ENCODE measurements at regions of chr12 and their contacts with region 1.

Region 1: GRCh38 chr12:113973109-113973904 is 7.2 kb upstream of the RBM19 start:
- DNase-seq: no peak
- ATAC-seq: no peak
- H3K4me3 ChIP-seq: no peak overlapping the region
- H3K27ac ChIP-seq: no peak overlapping the region
- H3K4me1 ChIP-seq: no peaks in the 10 kb centered on the region
- H3K27me3 ChIP-seq: no peaks in the 10 kb centered on the region

Region 2: DNA sequence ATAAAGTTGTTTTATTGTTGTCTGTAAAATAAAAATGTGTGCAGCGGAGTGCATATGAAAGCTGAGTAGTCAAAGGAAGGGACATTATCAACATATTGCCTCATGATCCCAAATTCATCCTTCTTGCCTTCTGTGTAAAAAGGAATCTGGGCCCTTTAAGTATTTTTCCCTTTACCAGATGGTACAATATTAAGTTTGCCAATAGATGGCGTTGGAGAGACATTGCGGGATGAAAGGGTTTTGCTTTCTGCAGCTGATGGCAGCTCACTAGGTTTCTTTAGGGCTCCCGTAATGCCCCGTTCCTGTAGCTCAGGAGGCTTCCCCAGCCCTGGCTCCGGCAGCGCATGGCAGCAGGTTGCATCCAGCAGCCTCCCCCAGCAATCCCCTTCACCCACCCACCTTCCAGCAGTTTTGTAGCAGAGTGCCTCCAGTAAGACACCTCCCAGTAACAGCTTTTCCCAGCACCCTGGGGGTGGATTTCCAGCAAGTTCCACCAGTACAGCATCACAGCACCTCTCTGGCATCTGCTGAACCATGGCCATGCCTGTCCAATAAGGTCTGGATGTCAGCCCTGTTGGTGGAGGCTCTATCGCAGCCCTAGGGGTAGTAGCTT is 1949.8 kb after region 1 on chr12:
- intact Hi-C with region 1: loop called in 1 of 2 experiments (anchors 10 kb)
- DNase-seq: no peak
- ATAC-seq: no peak
- H3K4me3 ChIP-seq: no peak overlapping the region
- H3K27ac ChIP-seq: no peak overlapping the region
- H3K4me1 ChIP-seq: no peaks in the 10 kb centered on the region
- H3K27me3 ChIP-seq: peaks cover 0 to 1% of the 10 kb centered on the region in 2 donors